Activated T-helper 1 cell treated with anti-CD3 and anti-CD28 coated beads, Interleukin-12 subunit alpha, Interleukin-12 subunit beta, Interleukin-2, Interleukin-4 antibody, amounts not matched to agents 30 ng/mL and 10 ng/mL and 1 ng/mL, durations not matched to agents 14 hours and 24 hours and 36 hours (primary cell): ENCODE measurements at regions of chr1 and their contacts with region 1.

Region 1: GRCh38 chr1:207797229-207797961 is 45.5 kb downstream of the CD46 start:
- DNase-seq: peak; percentile 62
- H3K4me3 Mint-ChIP-seq: no peak overlapping the region
- H3K27ac Mint-ChIP-seq: peak overlapping the region; percentile 32
- H3K4me1 Mint-ChIP-seq: peaks cover 36% of the 10 kb centered on the region
- H3K27me3 Mint-ChIP-seq: no peaks in the 10 kb centered on the region

Region 2: DNA sequence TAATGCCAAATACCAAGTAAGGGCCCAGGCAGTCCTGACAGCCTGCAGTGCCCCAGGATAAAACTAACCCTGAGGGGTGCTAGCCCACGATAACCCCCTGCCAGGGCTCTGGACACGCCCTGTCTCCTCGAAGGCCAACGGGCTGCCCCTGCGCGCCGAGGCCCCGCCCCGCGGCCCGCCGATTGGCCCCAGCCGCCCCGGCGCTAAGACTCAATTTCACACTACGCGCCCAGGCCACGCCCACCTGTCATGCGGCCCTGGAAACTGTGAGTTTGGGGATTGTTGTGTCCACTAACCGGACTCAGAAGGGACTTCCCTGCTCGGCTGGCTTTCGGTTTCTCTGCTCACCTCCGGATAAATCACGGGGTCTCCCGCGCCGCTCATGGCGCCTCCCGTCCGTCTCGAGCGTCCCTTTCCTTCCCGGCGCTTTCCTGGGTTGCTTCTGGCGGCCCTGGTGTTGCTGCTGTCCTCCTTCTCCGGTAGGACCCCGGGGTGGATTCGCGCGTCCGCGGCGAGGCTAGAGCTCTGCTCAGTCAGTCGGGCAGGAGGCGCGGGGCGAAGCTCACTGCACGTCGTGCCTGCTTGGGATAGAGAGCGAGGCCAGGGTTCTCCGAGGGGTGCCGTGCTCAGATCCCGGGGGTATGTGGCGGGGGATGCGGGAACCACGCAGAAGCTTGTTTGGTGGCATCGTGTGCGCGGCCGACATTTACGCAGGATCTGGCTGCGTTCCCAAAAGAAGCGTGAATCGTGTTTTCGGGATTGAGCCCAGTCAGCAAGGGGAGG is 152.4 kb before region 1 on chr1 and contains the start of gene CR1L:
- intact Hi-C with region 1: loop called (anchors 10 kb)
- DNase-seq: peak; percentile 74
- H3K4me3 Mint-ChIP-seq: peak within 1 kb of the TSS; percentile 80
- H3K27ac Mint-ChIP-seq: no peak within 1 kb of the TSS
- H3K4me1 Mint-ChIP-seq: peaks cover 8% of the 10 kb centered on the region
- H3K27me3 Mint-ChIP-seq: peaks cover 26% of the 10 kb centered on the region
- total RNA-seq, gene CR1L: not detected in 2 replicates

Region 3: DNA sequence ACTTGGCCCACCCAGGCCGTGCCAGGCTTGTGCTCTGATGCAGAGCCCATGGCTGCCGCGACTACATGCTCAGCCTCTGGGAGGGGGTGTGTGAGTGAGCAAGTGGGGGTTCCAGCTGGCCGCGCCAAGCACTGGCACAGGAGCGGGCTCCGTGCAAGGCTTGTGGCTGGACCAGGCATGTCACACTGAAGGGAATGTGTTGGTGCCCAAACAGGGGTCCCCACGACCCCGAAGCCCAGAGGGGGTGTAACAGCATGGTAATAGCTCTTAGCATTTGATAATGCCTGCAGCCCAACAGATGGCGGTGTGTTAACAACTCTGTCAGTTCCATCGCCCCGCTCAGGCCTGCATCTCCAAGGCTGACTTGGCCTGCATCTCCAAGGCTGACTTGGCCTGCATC is 83.9 kb before region 1 on chr1:
- intact Hi-C with region 1: loop called (anchors 1 kb)
- DNase-seq: no peak
- H3K4me3 Mint-ChIP-seq: no peak overlapping the region
- H3K27ac Mint-ChIP-seq: no peak overlapping the region
- H3K4me1 Mint-ChIP-seq: no peaks in the 10 kb centered on the region
- H3K27me3 Mint-ChIP-seq: peaks cover 3% of the 10 kb centered on the region

Region 4: GRCh38 chr1:207751790-207752455 is 45.5 kb before region 1 on chr1 and contains the start of gene CD46:
- intact Hi-C with region 1: loop called (anchors 1 kb)
- DNase-seq: peak; percentile 93
- H3K4me3 Mint-ChIP-seq: peak within 1 kb of the TSS; percentile 98
- H3K27ac Mint-ChIP-seq: peak within 1 kb of the TSS; percentile 95
- H3K4me1 Mint-ChIP-seq: peaks cover 61% of the 10 kb centered on the region
- H3K27me3 Mint-ChIP-seq: no peaks in the 10 kb centered on the region
- total RNA-seq, gene CD46: 101 and 105 TPM in 2 replicates

Region 5: DNA sequence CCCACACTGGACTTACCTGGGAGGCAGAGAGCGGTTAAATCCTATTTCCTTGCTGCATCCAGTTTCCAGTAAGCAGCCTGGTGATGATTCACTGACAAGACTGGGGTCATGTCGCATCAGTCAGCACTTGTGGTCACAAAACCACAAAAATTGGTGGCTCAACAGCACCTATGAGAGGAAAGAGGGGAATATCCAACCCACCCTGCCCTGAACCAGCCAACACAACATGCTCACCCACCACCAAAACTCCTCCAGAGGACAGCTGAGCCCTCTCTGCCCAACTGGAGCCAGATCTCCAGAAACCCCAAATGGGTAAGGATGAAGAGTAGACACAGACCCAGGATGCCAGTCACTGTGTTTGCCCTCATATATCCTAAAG is 18.5 kb after region 1 on chr1:
- intact Hi-C with region 1: loop called (anchors 2 kb)
- DNase-seq: no peak
- H3K4me3 Mint-ChIP-seq: no peak overlapping the region
- H3K27ac Mint-ChIP-seq: peak overlapping the region; percentile 69
- H3K4me1 Mint-ChIP-seq: peaks cover 58% of the 10 kb centered on the region
- H3K27me3 Mint-ChIP-seq: no peaks in the 10 kb centered on the region

Region 6: DNA sequence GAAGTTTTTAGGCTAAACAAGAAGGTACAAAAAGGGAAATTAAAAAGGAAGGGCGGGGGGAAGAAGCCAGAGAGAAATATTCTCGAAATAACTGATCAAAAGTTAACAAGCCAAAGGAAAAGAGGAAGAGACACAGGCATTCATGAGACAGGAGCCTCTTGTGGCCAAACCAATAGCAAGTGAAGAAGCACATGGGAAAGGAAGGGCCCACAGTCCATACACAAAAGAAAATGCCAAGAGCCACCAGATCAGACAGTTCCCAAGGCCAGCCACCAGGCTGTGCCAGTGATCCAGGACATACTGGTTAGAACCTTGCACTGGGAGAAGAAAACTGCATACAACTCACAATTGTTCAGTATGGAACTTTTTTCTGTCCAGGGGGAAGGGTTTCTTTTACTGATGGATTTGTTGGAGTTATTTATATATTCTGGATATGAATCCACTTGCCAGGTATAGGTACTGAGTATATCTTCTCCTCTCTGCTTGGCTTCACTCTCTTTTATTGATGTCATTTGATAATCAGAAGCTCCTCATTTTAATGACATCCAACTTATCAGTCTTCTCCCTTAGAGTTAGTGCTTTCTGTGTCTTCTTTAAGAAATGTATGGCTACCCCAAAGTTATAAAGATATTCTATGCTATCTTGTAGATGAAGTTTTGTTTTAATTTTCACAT is 31.2 kb after region 1 on chr1:
- intact Hi-C with region 1: loop called (anchors 2 kb)
- DNase-seq: peak; percentile 36
- H3K4me3 Mint-ChIP-seq: no peak overlapping the region
- H3K27ac Mint-ChIP-seq: peak overlapping the region; percentile 67
- H3K4me1 Mint-ChIP-seq: peaks cover 98% of the 10 kb centered on the region
- H3K27me3 Mint-ChIP-seq: peaks cover 2% of the 10 kb centered on the region

Region 7: DNA sequence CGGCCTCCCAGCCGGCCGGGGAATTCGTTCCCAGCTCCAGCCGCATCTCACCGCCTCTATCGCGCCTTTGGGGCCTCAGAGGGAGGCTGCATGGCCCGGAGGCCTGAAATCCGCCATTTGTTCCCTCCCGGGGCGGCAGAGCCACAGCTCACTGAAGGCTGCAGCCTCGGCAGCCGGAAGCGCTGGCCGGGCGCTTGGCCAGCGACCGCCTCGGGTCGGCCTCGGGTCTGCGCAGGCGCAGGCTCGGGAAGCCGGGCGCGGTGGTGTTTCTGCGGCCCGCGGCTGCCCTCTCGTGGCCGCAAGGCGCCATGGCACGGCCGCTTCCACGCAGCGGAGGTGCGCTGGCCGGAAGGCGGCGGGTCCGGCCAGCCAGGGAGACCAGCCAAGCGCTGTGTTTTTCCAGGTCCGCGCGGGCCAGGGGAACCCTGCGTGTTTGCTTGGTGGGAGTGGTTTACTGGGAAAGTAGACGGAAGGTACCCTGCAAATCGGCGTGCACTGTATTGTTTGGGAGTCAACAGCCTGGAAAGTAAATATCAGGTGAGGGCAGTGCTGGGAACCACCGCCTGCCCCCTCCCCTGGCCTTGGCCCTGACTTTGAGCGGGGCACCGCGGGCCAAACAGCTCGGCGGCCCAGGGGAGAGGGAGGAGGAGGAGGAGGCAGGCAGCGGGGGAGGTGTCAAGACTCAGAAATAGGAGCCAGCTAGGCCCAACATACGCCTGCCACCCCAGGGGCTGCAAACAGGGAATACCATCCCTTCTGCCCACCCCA is 166.2 kb after region 1 on chr1:
- intact Hi-C with region 1: loop called (anchors 1 kb)
- DNase-seq: peak; percentile 84
- H3K4me3 Mint-ChIP-seq: peak overlapping the region; percentile 83
- H3K27ac Mint-ChIP-seq: no peak overlapping the region
- H3K4me1 Mint-ChIP-seq: peaks cover 11% of the 10 kb centered on the region
- H3K27me3 Mint-ChIP-seq: peaks cover 38% of the 10 kb centered on the region